Aorta (tissue), 5 donors: ENCODE measurements at regions of chr5 and their contacts with region 1.

Region 1: DNA sequence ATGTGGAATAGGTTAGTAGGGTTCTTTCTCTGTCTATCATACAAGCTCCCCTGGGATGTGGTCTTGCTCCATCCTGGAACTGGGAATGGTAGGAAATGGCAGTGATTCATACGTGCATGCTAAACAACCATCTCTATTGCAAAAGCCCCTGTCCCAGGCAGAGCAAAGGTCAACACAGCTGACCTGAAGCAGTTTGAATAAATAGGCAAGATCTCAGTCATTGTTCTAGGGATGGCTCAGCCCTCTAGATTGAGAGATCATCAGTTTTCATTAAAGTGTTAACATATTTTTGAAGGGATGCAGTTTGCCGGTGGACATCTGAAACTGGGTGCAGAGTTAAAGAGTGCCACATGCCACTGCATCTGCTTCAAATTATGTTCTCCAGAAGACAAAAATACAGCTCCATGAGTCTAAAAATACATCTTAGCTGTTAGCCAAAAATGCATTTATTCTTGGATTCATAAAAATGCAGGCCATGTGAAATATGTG is 224.1 kb downstream of the ESM1 start:
- DNase-seq: no peak
- ATAC-seq: peak; percentile 36
- H3K4me3 ChIP-seq: no peak overlapping the region
- H3K27ac ChIP-seq: peak overlapping the region; percentile 67 to 76
- H3K4me1 ChIP-seq: peaks cover 10 to 11% of the 10 kb centered on the region in 2 donors
- H3K27me3 ChIP-seq: no peaks in the 10 kb centered on the region

Region 2: DNA sequence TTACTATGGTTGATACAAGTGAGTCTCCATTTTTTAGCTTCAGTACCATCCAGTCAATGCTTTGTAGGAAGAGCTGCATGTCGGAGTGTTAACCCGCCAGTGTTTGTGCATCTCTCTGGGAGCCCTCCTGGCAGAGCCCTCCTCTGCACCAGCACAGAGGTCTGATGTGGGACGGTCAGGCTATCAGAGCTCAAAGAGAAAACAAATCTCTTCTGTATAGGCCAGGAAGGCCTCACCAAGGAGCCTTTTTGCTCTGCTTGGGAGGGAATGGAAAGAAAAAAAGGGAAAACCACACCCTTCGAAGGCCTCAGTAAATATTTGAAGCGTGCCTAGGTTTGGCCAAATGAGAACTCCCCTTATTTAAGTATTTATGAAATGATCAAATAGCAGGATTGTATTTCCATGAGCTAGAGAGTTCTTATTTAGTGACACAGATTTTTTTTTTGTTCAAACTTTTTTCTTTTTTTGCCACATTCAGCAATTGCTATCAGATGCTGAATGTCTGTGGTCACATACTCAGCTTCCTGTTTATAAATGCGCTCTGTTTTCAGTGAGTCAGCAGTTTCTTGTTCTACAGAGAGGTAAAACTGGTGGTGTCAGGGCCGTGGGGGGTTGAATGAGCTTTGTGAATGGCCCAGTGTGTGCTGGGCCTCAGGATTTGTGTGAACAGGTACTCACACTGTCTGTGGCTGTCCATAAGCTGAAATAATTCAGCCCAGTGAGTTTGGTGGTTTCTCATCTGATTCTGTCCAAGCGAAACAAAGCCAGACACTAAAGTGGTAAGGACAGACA is 17.1 kb before region 1 on chr5:
- intact Hi-C with region 1: no loop called
- DNase-seq: peak in 1 of 2 donors; percentile 60
- ATAC-seq: peak; percentile 61
- H3K4me3 ChIP-seq: no peak overlapping the region
- H3K27ac ChIP-seq: peak overlapping the region in 1 of 2 donors; percentile 46
- H3K4me1 ChIP-seq: no peaks in the 10 kb centered on the region
- H3K27me3 ChIP-seq: no peaks in the 10 kb centered on the region

Region 3: DNA sequence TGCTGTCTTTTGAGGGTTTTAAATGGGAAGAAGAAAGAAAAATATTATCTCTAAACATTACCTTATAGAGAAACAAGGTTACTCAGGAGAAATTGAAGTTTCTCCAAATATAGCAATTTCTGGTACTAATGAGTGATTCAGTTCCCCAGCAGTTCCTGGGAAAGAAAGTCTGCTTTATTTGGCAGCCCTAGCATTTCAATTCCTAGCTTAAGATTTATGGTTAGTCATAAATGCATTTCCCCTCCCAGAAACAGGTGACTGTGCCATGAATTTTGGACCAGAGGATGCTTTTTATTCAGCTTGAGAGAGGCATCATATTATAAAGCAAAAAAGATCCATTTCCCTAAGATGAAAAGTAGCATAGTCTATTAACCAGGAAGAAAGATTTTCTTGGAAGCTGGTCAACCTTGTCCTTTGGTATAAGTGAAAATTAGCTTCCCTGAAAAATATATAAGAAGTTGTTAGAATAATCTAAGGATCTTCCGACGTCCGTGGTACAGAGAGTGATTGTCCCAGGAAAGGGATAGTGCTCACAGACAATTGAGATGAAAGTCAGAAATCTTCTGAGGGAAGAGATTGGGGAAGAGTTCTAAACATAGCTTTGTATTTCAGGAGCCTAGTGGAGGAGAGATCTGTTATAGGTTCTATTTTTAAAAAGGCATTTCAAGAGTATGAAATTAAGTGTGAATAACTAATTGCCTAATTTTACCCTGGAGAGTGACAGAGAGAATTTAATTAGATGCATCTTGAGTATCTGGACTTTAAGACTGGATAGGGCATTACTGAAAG is 59.3 kb after region 1 on chr5:
- intact Hi-C with region 1: loop called in 1 of 2 experiments (anchors 5 kb)
- DNase-seq: no peak
- ATAC-seq: no peak
- H3K4me3 ChIP-seq: no peak overlapping the region
- H3K27ac ChIP-seq: peak overlapping the region; percentile 75 to 76
- H3K4me1 ChIP-seq: peaks cover 2 to 4% of the 10 kb centered on the region in 2 donors
- H3K27me3 ChIP-seq: no peaks in the 10 kb centered on the region